ENCODE measurements at regions of chr5 and their contacts with region 1.

Region 1: GRCh38 chr5:145834917-145835847 is at the start of gene PRELID2:
- DNase-seq: peak; percentile 91 to 97 (median 95)
- H3K4me3 ChIP-seq: peak within 1 kb of the TSS; percentile 66 to 93 (median 81)
- H3K27ac ChIP-seq: peak within 1 kb of the TSS in 1 of 2 experiments; percentile 80
- H3K4me1 ChIP-seq: peaks cover 17 to 38% (median 32%) of the 10 kb centered on the region in 4 experiments
- H3K27me3 ChIP-seq: no peaks in the 10 kb centered on the region

Region 2: GRCh38 chr5:145846081-145846480 is 10.9 kb after region 1 on chr5:
- CTCF ChIA-PET with region 1: interaction called, 11 read pairs
- POLR2A ChIA-PET with region 1: no interaction called
- DNase-seq: no peak
- H3K4me3 ChIP-seq: no peak overlapping the region
- H3K27ac ChIP-seq: no peak overlapping the region
- H3K4me1 ChIP-seq: no peaks in the 10 kb centered on the region
- H3K27me3 ChIP-seq: no peaks in the 10 kb centered on the region

Region 3: GRCh38 chr5:145887976-145888574 is 52.9 kb after region 1 on chr5:
- CTCF ChIA-PET with region 1: interaction called, 11 read pairs
- POLR2A ChIA-PET with region 1: no interaction called
- DNase-seq: peak; percentile 40 to 69 (median 62)
- H3K4me3 ChIP-seq: no peak overlapping the region
- H3K27ac ChIP-seq: no peak overlapping the region
- H3K4me1 ChIP-seq: no peaks in the 10 kb centered on the region
- H3K27me3 ChIP-seq: no peaks in the 10 kb centered on the region